Dendritic cell treated with granulocyte-macrophage colony-stimulating factor and Interleukin-4, amounts not matched to agents 40 ng/mL and 50 ng/mL, for 4 days (primary cell): ENCODE measurements at regions of chr15 and their contacts with region 1.

Region 1: DNA sequence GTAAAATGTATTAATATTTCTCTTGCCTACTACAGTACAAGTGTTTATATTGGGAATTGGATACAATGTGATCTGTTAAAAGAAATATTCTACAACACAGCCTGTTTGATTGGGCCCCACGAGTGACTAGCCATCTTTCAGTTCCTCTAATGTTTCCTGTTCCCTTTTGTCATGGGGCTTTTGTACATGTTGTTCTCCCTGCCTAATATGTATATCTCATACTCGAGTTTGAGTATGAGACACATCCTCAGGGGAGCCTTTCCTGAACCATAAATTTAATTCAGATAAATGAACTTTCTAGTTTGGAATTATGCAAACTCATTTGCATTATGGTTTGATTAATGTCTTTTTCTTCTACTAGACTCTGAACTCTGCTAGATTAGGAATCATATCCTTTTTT is 65.5 kb downstream of the MEF2A start:
- H3K4me3 Mint-ChIP-seq: no peak overlapping the region
- H3K27ac Mint-ChIP-seq: peak overlapping the region; percentile 82
- H3K4me1 Mint-ChIP-seq: peaks cover 69% of the 10 kb centered on the region
- H3K27me3 Mint-ChIP-seq: no peaks in the 10 kb centered on the region

Region 2: DNA sequence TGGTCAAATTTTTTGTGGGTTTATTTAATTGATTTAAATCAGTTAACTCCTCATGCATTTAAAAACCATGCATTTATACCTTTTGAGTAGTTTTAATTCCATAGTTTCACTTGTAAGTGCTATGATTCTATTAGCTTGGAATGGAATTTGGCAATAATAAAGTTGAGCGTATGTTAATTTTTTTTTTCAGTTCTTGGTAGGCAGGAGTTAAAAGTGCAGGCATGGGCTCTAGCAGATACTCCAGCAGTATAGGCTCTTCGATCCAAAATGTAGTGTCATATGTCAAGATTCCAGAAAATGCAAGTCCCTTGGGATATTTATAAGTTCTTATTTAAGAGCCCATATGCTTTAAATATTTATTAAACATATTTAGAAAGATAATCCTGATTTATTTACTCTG is 31.6 kb after region 1 on chr15:
- intact Hi-C with region 1: loop called (anchors 5 kb)
- H3K4me3 Mint-ChIP-seq: no peak overlapping the region
- H3K27ac Mint-ChIP-seq: no peak overlapping the region
- H3K4me1 Mint-ChIP-seq: peaks cover 16% of the 10 kb centered on the region
- H3K27me3 Mint-ChIP-seq: no peaks in the 10 kb centered on the region